ENCODE measurements at regions of chr18 and their contacts with region 1.

Region 1: DNA sequence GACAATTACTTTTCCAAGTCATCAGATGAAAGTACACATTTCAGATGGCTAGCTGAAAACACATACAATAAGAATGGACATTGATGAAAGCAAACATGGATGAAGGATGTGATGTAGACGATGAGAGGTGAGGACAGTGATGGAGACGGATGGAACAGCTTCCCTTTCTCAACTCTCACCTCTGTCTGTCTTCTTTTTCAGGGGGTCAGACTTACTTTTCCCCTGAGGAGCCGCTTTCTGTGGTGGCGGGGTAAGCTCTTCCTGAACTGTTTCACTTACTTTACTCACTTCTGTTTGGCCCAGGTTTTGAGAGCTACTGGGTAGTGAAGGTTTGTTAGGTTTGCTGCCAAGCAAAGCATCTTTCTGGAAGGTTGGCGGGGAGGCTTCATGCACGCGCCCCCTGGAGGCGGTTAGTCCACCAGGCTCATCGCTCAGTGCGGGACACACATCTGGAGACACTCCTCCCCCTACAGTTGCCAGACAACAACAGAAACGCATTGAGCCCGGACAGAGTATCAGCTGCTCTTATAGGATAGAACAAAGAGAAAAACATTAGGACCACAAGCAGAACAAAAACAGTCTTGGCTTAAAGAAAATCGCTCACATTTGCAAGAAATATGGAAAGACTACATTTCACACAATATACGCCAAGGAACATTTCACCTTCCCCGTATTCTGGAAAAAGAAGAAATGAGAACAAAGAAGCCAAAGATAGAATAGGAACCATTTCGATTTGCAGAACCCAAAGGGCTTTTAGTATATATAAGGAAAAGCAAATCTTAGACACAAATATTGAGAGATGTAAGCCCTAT is 90.5 kb downstream of the MYOM1 start:
- DNase-seq: peak; percentile 87
- H3K4me3 ChIP-seq: no peak overlapping the region
- H3K27ac ChIP-seq: no peak overlapping the region
- H3K4me1 ChIP-seq: no peaks in the 10 kb centered on the region
- H3K27me3 ChIP-seq: no peaks in the 10 kb centered on the region
- CTCF ChIP-seq: peak; percentile 95 to 96
- POLR2A ChIP-seq: no peak

Region 2: GRCh38 chr18:2923464-2923863 is 205.8 kb before region 1 on chr18:
- CTCF ChIA-PET with region 1: interaction called, 11 read pairs
- POLR2A ChIA-PET with region 1: no interaction called
- dilution Hi-C with region 1: no loop called
- intact Hi-C with region 1: no loop called
- DNase-seq: peak; percentile 84
- H3K4me3 ChIP-seq: no peak overlapping the region
- H3K27ac ChIP-seq: peak overlapping the region; percentile 46
- H3K4me1 ChIP-seq: peaks cover 6% of the 10 kb centered on the region
- H3K27me3 ChIP-seq: no peaks in the 10 kb centered on the region
- CTCF ChIP-seq: no peak
- POLR2A ChIP-seq: no peak

Region 3: DNA sequence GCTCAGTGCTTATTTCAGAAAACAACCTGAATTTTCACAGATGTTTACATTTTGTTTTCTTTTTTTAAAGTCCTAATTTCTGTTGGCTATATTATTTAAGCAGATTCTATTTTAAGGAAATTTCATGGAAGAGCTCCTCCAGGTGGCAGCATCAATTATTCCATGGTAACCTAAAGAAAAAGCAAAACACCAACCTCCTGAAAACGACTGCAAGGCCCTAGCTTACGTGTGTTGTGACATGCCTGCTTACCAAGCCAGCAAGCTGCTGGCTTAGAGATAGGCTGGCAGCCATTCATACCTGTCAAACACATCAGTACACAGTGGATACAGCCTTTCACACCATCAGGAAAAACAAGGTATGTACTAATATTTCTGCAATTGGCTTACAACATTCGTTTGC is 181.2 kb before region 1 on chr18:
- CTCF ChIA-PET with region 1: interaction called, 34 read pairs
- POLR2A ChIA-PET with region 1: no interaction called
- dilution Hi-C with region 1: no loop called
- intact Hi-C with region 1: no loop called
- DNase-seq: peak; percentile 62
- H3K4me3 ChIP-seq: no peak overlapping the region
- H3K27ac ChIP-seq: peak overlapping the region; percentile 5
- H3K4me1 ChIP-seq: no peaks in the 10 kb centered on the region
- H3K27me3 ChIP-seq: no peaks in the 10 kb centered on the region
- CTCF ChIP-seq: peak in 1 of 2 donors; percentile 38
- POLR2A ChIP-seq: no peak

Region 4: DNA sequence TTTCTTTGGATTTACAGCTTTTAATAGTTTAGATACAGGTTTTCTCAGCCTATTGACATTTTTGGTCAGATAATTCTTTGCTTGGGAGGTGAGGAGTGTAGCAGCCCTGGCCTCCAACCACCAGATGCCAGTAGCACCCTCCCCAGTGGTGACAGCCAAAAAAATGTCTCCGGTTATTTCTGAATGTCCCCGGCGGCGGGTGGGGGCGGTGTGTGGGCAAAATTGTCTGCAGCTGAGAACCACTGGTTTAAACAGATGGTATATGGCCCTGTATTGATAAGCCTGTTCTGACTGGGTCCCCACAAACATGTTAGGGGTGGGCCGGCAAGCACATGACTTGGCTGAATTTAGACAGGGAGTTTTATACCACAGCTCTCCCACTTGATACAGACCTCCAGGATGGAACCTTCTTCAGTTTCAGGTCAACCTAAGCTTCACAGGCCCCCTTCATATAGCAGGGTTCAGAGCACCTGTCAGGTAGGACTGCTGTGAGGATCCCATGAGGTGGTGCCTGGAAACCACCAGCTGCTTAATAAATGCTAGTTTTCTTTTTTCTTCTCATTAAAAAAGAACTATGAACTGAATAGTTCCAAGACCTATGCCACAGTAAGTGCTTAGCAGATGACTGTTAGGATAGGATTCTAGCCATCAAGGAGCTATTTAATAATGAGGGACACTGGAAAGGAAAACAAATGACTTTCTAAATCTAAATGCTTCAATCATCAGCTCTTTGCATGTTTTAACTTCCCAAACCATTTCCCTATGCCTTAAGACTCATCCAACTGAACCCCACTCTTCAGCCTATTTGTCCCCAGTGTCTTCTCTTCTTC is 134.4 kb before region 1 on chr18:
- CTCF ChIA-PET with region 1: interaction called, 11 read pairs
- POLR2A ChIA-PET with region 1: no interaction called
- dilution Hi-C with region 1: no loop called
- intact Hi-C with region 1: no loop called
- DNase-seq: no peak
- H3K4me3 ChIP-seq: no peak overlapping the region
- H3K27ac ChIP-seq: no peak overlapping the region
- H3K4me1 ChIP-seq: no peaks in the 10 kb centered on the region
- H3K27me3 ChIP-seq: no peaks in the 10 kb centered on the region
- CTCF ChIP-seq: peak in 1 of 2 donors; percentile 9
- POLR2A ChIP-seq: no peak

Region 5: GRCh38 chr18:3074087-3074486 is 55.2 kb before region 1 on chr18:
- CTCF ChIA-PET with region 1: interaction called, 10 read pairs
- POLR2A ChIA-PET with region 1: no interaction called
- dilution Hi-C with region 1: no loop called
- intact Hi-C with region 1: no loop called
- DNase-seq: no peak
- H3K4me3 ChIP-seq: no peak overlapping the region
- H3K27ac ChIP-seq: no peak overlapping the region
- H3K4me1 ChIP-seq: no peaks in the 10 kb centered on the region
- H3K27me3 ChIP-seq: no peaks in the 10 kb centered on the region
- CTCF ChIP-seq: no peak
- POLR2A ChIP-seq: no peak

Region 6: DNA sequence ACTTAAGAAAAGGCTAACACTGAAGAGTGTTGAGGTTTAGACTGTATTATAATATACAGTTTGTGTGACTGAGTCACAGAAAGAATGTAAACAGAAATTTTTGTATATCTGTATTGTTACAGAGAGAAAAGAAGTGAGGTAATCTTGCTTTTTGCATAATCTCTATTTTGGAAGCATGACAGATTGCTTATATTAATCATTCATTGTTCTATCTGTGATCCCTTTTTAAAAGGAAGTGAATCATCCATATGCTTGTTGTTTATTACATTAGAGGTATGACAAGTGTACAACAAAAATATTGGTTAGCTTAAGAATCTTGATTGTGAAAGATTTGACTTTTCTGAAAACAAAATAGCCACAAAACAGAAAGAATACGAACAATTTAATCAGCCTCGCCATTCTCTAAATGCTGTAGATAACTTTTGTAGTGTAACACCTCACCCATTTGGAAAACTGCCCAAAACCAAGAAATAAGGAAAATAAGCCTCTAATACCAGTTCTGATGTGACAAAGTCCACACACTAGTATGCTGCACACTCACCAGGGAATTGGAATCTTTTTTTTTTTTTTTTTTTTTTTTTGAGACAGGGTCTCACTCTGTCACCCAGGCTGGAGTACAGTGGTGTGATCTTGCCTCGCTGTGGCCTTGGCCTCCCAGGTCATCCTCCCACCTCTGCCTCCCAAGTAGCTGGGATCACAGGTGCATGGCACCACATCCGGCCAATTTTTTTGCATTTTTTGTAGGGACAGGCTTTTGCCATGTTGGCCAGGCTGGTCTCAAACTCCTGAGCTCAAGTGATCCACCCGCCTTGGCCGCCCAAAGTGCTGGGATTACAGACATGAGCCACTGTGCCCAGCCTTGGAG is 24.8 kb before region 1 on chr18:
- CTCF ChIA-PET with region 1: interaction called, 17 read pairs
- POLR2A ChIA-PET with region 1: no interaction called
- dilution Hi-C with region 1: no loop called
- intact Hi-C with region 1: loop called (anchors 2 kb)
- DNase-seq: peak; percentile 91
- H3K4me3 ChIP-seq: peak overlapping the region in 1 of 3 experiments; percentile 21
- H3K27ac ChIP-seq: peak overlapping the region; percentile 96
- H3K4me1 ChIP-seq: peaks cover 30% of the 10 kb centered on the region
- H3K27me3 ChIP-seq: no peaks in the 10 kb centered on the region
- CTCF ChIP-seq: no peak
- POLR2A ChIP-seq: no peak

Region 7: DNA sequence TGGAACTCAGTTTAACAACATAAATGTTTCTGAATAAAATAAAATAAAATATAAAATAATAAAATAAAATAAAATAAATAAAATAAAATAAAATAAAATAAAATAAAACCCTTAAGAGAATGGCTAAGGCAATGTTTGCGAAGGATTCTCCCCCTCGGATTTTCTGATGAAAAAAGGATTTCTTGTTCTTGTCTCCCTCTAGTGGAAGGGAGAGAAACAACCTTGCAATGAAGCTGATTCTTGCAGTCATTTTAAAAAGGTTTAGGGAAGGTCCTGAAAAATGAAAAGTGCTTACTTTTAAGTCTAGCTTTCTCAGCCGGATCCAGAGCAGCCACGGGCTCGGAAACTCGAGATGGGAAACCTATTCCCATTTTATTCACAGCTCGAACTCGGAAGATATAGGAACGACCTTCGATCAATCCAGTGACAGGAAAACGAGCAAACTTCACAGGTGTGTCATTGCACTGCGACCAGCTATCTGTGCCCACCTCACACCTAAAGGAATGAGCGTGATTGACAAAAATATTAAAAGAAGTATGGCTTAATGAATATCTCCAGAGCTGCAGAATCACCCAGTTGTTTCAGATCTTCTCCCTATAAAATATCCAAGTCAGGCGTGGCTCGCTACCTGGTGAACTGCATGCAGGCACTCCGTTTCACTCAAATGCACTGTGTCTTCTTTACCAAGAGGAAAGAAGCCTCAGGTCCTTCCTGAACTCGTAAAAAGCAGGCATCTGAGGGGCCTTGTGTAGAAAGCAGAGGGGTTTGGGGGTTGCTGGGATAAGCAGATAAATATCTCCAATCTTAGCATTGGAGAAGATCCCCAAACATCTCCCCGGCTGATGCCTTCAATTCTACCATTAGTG is 22.4 kb after region 1 on chr18:
- CTCF ChIA-PET with region 1: interaction called, 13 read pairs
- POLR2A ChIA-PET with region 1: no interaction called
- dilution Hi-C with region 1: no loop called
- intact Hi-C with region 1: no loop called
- DNase-seq: peak; percentile 35
- H3K4me3 ChIP-seq: no peak overlapping the region
- H3K27ac ChIP-seq: no peak overlapping the region
- H3K4me1 ChIP-seq: peaks cover 12% of the 10 kb centered on the region
- H3K27me3 ChIP-seq: no peaks in the 10 kb centered on the region
- CTCF ChIP-seq: peak; percentile 54
- POLR2A ChIP-seq: no peak

Measured in endothelial cell of umbilical vein (primary cell).